HEK293 (cell line): ENCODE measurements at regions of chr1 and their contacts with region 1.

Region 1: DNA sequence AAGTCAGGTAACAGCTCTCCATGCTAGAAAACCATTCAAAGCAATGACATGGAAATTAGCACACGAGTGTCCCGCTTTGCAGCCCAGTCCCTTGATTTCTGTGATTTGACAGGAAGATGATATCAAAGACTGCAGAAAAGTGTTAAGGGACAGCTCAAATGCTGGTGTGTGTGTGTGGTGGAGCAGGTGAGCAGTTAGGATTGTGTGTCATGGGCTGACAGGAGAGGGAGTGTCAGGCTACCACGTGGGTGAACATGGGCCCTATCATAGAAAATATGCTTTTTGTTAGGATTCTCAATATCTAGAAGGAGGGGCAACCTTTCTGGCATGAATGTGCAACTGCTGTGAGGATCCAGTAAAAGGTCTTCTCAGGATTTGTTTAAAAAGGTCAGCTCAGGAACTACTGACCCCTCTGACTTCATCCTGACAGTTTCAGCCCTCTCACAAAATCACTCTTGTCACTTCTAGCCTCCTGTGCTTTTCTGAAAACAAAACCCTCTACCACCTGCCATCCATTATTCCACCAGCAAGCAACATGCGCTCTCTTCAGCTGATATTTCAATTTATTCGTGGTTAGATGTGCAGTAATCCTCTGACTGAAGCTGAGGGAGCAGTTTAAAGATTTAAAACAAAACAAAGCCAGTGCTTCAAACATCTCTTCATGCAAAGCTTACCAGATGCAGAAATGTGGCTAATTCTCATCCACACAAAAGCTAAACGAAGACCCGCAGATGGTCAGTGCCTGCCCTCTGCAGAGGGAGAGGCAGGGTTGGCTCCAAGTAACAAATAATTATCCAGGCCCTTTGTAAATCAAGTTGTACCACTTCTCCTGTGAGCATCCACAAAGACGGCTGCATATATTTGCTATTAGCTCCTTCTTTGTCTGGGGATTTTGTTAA is 397.9 kb downstream of the PTBP2 start:
- H3K4me3 ChIP-seq: no peak overlapping the region
- H3K27ac ChIP-seq: no peak overlapping the region
- H3K4me1 ChIP-seq: no peaks in the 10 kb centered on the region
- CTCF ChIP-seq: no peak

Region 2: GRCh38 chr1:96863449-96863848 is 256.1 kb before region 1 on chr1:
- CTCF ChIA-PET with region 1: no interaction called
- POLR2A ChIA-PET with region 1: no interaction called
- H3K4me3 ChIP-seq: no peak overlapping the region
- H3K27ac ChIP-seq: no peak overlapping the region
- H3K4me1 ChIP-seq: no peaks in the 10 kb centered on the region
- CTCF ChIP-seq: no peak

Region 3: GRCh38 chr1:97137862-97138514 is 18.5 kb after region 1 on chr1:
- CTCF ChIA-PET with region 1: interaction called, 11 read pairs
- POLR2A ChIA-PET with region 1: no interaction called
- H3K4me3 ChIP-seq: no peak overlapping the region
- H3K27ac ChIP-seq: no peak overlapping the region
- H3K4me1 ChIP-seq: no peaks in the 10 kb centered on the region
- CTCF ChIP-seq: no peak